CD4-positive, alpha-beta T cell (primary cell): ENCODE measurements at regions of chr2 and their contacts with region 1.

Region 1: DNA sequence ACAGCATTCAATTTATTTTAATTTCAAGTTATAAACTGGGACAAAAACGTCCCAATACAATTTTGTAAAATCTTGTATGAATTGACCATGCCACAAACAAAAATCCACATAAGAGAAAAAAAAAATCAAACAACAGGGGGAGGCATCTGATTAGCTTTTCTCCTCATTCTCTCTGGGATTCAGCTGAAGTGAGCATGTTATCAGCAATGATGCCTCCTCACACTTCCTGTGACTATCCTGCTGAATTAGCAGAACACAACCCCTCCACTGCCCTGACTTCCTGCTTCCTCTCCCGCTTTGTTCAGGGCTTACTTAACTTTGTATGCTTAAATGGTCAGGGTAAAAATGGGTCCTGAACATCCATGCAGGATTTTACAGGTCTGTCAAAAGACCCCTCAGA is 132.2 kb upstream of the ITGB6 start:
- DNase-seq: peak in 5 of 14 experiments; percentile 8 to 59 (median 51)
- ATAC-seq: peak; percentile 50
- H3K4me3 ChIP-seq: no peak overlapping the region
- H3K4me3 Mint-ChIP-seq: peak overlapping the region; percentile 57
- H3K27ac ChIP-seq: no peak overlapping the region
- H3K27ac Mint-ChIP-seq: peak overlapping the region; percentile 50
- H3K4me1 ChIP-seq: peaks cover 52% of the 10 kb centered on the region
- H3K4me1 Mint-ChIP-seq: peaks cover 95% of the 10 kb centered on the region
- H3K27me3 ChIP-seq: no peaks in the 10 kb centered on the region
- H3K27me3 Mint-ChIP-seq: no peaks in the 10 kb centered on the region
- CTCF ChIP-seq: no peak

Region 2: GRCh38 chr2:160347269-160347863 is 15.0 kb after region 1 on chr2:
- CTCF ChIA-PET with region 1: interaction called, 5 read pairs
- POLR2A ChIA-PET with region 1: interaction called, 5 read pairs
- intact Hi-C with region 1: loop called in 1 of 2 experiments (anchors 2 kb)
- DNase-seq: no peak
- ATAC-seq: no peak
- H3K4me3 ChIP-seq: no peak overlapping the region
- H3K4me3 Mint-ChIP-seq: no peak overlapping the region
- H3K27ac ChIP-seq: no peak overlapping the region
- H3K27ac Mint-ChIP-seq: peak overlapping the region; percentile 49
- H3K4me1 ChIP-seq: peaks cover 18% of the 10 kb centered on the region
- H3K4me1 Mint-ChIP-seq: peaks cover 86% of the 10 kb centered on the region
- H3K27me3 ChIP-seq: no peaks in the 10 kb centered on the region
- H3K27me3 Mint-ChIP-seq: no peaks in the 10 kb centered on the region
- CTCF ChIP-seq: no peak